HEK293T (cell line): ENCODE measurements at regions of chr11 and their contacts with region 1.

Region 1: GRCh38 chr11:62855571-62856332 is 16.4 kb upstream of the WDR74 start:
- DNase-seq: peak; percentile 98

Region 2: GRCh38 chr11:62671575-62672389 is 184.0 kb before region 1 on chr11 and contains the starts of genes LBHD1 and UQCC3:
- CTCF ChIA-PET with region 1: no interaction called
- POLR2A ChIA-PET with region 1: interaction called, 12 read pairs
- DNase-seq: peak; percentile 62

Region 3: GRCh38 chr11:62726915-62727763 is 128.6 kb before region 1 on chr11 and contains the start of gene HNRNPUL2:
- CTCF ChIA-PET with region 1: no interaction called
- POLR2A ChIA-PET with region 1: interaction called, 44 read pairs
- DNase-seq: peak; percentile 92

Region 4: DNA sequence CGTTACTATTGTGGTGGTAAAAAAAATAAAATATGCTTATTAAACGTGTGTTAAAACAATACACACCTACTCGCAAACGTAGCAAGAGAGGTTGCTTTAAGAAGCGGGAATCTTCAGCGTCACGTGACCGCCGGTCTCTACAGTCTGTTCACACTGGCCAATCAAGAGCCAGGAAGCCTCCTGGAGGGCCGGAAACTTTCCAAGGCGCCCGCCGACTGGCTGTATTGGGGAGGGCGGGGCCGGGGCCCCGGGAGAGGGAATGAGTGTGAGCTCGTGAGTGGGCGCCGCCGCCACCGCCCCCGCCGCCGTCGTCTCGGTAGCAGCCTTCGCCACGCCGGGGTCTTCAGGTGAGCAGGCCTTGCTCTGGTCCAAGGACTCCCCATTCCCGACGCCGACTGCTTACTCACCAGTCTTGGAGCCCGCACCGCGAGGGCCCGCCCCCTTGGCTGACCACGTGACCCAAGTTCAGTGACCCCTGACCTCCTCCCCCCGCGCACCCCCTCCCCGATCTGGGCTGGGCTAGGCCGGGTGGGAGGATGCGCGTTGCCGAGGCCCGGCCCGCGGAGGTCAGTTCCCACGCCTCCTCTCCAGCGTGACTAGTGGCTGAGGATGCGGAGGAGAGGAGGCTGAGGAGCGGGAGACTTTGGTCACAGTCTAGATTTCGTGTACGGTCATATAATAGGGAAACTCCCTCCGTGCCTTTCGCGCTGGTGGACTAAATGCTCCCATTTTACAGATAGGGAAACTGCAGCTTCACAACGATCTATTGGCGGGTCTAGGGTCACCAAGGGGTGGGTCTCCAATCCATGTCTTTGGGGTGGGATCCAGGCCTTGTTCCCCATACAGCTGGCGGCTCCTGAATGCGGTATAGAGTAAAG is 84.4 kb before region 1 on chr11 and contains the start of gene TAF6L:
- CTCF ChIA-PET with region 1: no interaction called
- POLR2A ChIA-PET with region 1: interaction called, 11 read pairs
- DNase-seq: peak; percentile 92

Region 5: GRCh38 chr11:62831520-62832335 is 24.0 kb before region 1 on chr11 and contains the start of gene STX5:
- CTCF ChIA-PET with region 1: no interaction called
- POLR2A ChIA-PET with region 1: interaction called, 51 read pairs
- DNase-seq: peak; percentile 95

Region 6: DNA sequence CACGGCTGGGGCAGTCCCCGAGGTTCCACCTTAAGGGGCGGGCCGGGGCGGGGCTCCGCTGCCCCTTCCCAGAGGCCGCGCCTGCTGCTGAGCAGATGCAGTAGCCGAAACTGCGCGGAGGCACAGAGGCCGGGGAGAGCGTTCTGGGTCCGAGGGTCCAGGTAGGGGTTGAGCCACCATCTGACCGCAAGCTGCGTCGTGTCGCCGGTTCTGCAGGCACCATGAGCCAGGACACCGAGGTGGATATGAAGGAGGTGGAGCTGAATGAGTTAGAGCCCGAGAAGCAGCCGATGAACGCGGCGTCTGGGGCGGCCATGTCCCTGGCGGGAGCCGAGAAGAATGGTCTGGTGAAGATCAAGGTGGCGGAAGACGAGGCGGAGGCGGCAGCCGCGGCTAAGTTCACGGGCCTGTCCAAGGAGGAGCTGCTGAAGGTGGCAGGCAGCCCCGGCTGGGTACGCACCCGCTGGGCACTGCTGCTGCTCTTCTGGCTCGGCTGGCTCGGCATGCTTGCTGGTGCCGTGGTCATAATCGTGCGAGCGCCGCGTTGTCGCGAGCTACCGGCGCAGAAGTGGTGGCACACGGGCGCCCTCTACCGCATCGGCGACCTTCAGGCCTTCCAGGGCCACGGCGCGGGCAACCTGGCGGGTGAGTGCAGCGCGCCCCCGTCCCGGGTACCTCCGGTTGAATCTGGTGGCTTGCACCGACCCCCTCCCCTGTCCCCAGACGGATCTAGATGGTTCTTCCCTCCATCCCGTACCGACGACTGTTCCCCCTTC is 25.2 kb after region 1 on chr11 and contains the start of gene SLC3A2:
- CTCF ChIA-PET with region 1: interaction called, 6 read pairs
- POLR2A ChIA-PET with region 1: interaction called, 87 read pairs
- DNase-seq: peak; percentile 82